ENCODE measurements at regions of chr13 and their contacts with region 1.

Region 1: DNA sequence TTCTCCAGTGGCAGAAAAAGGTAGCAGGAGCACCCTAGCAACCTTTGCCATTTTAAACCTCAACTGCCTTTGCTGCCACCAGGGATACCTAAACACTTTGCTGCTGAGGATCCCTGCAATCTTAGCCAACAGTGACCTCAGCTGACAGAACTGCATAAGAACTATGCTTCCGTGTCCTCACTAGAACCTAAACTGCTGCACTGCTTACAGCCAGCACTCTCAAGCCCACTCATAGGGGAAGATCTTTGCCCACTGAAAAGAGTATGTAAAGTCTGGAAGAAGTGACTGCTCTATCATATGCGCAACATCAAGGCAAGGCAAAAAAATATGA is 270.0 kb upstream of the PCDH20 start:
- DNase-seq: peak; percentile 48
- H3K4me3 ChIP-seq: no peak overlapping the region
- H3K27ac ChIP-seq: no peak overlapping the region
- H3K4me1 ChIP-seq: no peaks in the 10 kb centered on the region
- H3K27me3 ChIP-seq: no peaks in the 10 kb centered on the region
- CTCF ChIP-seq: peak; percentile 54

Region 2: GRCh38 chr13:60627071-60627686 is 1058.5 kb before region 1 on chr13:
- CTCF ChIA-PET with region 1: no interaction called
- POLR2A ChIA-PET with region 1: no interaction called
- intact Hi-C with region 1: loop called (anchors 10 kb)
- DNase-seq: peak; percentile 79
- H3K4me3 ChIP-seq: no peak overlapping the region
- H3K27ac ChIP-seq: no peak overlapping the region
- H3K4me1 ChIP-seq: no peaks in the 10 kb centered on the region
- H3K27me3 ChIP-seq: peaks cover 8% of the 10 kb centered on the region
- CTCF ChIP-seq: peak; percentile 88

Region 3: DNA sequence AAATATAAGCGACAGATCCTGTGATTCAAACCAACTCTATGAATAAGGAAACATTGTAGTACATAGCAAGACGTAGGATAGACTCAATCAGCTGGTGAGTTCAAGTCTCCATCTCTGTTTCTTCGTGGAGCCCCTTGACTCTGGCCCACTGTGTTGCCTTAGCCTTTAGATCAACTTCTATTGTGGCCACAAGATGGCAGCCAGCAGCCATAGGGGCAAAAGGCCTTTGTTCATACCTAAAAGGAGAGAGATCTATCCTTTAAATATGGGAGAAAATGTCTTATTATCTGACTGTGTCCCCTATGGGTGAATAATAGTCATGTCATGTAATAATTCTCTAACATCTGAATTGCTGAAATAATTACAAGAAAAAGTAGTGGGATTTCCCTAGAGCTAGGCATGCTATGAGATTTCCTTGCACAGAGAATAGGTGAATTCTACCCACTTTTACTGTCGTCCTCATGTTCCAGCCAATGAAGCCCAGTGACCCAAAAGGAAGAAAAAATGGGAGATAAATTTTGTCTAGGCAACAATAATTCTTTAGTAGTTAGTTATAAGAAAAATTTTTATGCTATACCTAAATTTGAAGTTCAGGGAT is 399.4 kb before region 1 on chr13:
- CTCF ChIA-PET with region 1: no interaction called
- POLR2A ChIA-PET with region 1: no interaction called
- intact Hi-C with region 1: loop called (anchors 10 kb)
- DNase-seq: peak; percentile 61
- H3K4me3 ChIP-seq: no peak overlapping the region
- H3K27ac ChIP-seq: no peak overlapping the region
- H3K4me1 ChIP-seq: no peaks in the 10 kb centered on the region
- H3K27me3 ChIP-seq: no peaks in the 10 kb centered on the region
- CTCF ChIP-seq: peak; percentile 59

Region 4: GRCh38 chr13:61944329-61944929 is 258.8 kb after region 1 on chr13:
- CTCF ChIA-PET with region 1: no interaction called
- POLR2A ChIA-PET with region 1: no interaction called
- intact Hi-C with region 1: no loop called
- DNase-seq: no peak
- H3K4me3 ChIP-seq: no peak overlapping the region
- H3K27ac ChIP-seq: no peak overlapping the region
- H3K4me1 ChIP-seq: no peaks in the 10 kb centered on the region
- H3K27me3 ChIP-seq: no peaks in the 10 kb centered on the region
- CTCF ChIP-seq: no peak